ENCODE measurements at regions of chr11 and their contacts with region 1.

Region 1: GRCh38 chr11:102085864-102086551 is 24.2 kb upstream of the YAP1 start:
- DNase-seq: no peak
- H3K4me3 ChIP-seq: no peak overlapping the region
- H3K27ac ChIP-seq: no peak overlapping the region
- H3K4me1 ChIP-seq: no peaks in the 10 kb centered on the region
- H3K27me3 ChIP-seq: no peaks in the 10 kb centered on the region
- CTCF ChIP-seq: no peak
- EP300 ChIP-seq: no peak
- POLR2A ChIP-seq: no peak

Region 2: DNA sequence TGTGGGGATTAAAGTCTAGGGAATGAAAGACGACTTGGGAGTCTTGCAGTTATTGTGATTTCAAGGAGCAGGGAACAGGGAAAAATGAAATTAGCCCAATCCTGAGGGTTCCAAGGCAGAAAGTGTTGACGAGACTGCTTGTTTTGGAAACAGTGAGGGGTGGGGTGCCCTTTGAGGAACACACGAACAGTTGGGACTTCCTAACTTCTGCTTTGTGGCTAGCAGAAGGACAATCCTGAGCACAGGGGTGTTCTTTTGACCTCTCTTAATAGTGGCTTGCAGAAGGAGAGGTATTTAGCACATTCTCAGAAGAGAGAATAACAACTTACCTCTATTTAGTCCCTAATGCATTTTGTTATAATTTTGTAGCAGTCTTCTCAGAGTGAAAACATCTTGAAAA is 1944.8 kb before region 1 on chr11:
- in situ Hi-C with region 1: no loop called
- intact Hi-C with region 1: no loop called
- DNase-seq: no peak
- H3K4me3 ChIP-seq: no peak overlapping the region
- H3K27ac ChIP-seq: no peak overlapping the region
- H3K4me1 ChIP-seq: no peaks in the 10 kb centered on the region
- H3K27me3 ChIP-seq: no peaks in the 10 kb centered on the region
- CTCF ChIP-seq: no peak
- EP300 ChIP-seq: no peak
- POLR2A ChIP-seq: no peak

Region 3: GRCh38 chr11:101617735-101618332 is 468.2 kb before region 1 on chr11:
- in situ Hi-C with region 1: no loop called
- intact Hi-C with region 1: no loop called
- DNase-seq: no peak
- H3K4me3 ChIP-seq: no peak overlapping the region
- H3K27ac ChIP-seq: no peak overlapping the region
- H3K4me1 ChIP-seq: no peaks in the 10 kb centered on the region
- H3K27me3 ChIP-seq: no peaks in the 10 kb centered on the region
- CTCF ChIP-seq: no peak
- EP300 ChIP-seq: no peak
- POLR2A ChIP-seq: no peak

Region 4: GRCh38 chr11:102115557-102115956 is 29.5 kb after region 1 on chr11:
- in situ Hi-C with region 1: no loop called
- intact Hi-C with region 1: no loop called
- DNase-seq: peak; percentile 9
- H3K4me3 ChIP-seq: no peak overlapping the region
- H3K27ac ChIP-seq: peak overlapping the region; percentile 57 to 78 (median 71)
- H3K4me1 ChIP-seq: peaks cover 23 to 81% (median 47%) of the 10 kb centered on the region in 4 donors
- H3K27me3 ChIP-seq: no peaks in the 10 kb centered on the region
- CTCF ChIP-seq: no peak
- EP300 ChIP-seq: no peak
- POLR2A ChIP-seq: no peak

Region 5: GRCh38 chr11:102680945-102681344 is 594.9 kb after region 1 on chr11:
- in situ Hi-C with region 1: loop called in 1 of 4 experiments (anchors 25 kb)
- intact Hi-C with region 1: no loop called
- DNase-seq: no peak
- H3K4me3 ChIP-seq: no peak overlapping the region
- H3K27ac ChIP-seq: no peak overlapping the region
- H3K4me1 ChIP-seq: no peaks in the 10 kb centered on the region
- H3K27me3 ChIP-seq: no peaks in the 10 kb centered on the region
- CTCF ChIP-seq: no peak
- EP300 ChIP-seq: no peak
- POLR2A ChIP-seq: no peak

Measured in transverse colon (tissue), 4 donors.